B cell (primary cell): ENCODE measurements at regions of chr17 and their contacts with region 1.

Region 1: DNA sequence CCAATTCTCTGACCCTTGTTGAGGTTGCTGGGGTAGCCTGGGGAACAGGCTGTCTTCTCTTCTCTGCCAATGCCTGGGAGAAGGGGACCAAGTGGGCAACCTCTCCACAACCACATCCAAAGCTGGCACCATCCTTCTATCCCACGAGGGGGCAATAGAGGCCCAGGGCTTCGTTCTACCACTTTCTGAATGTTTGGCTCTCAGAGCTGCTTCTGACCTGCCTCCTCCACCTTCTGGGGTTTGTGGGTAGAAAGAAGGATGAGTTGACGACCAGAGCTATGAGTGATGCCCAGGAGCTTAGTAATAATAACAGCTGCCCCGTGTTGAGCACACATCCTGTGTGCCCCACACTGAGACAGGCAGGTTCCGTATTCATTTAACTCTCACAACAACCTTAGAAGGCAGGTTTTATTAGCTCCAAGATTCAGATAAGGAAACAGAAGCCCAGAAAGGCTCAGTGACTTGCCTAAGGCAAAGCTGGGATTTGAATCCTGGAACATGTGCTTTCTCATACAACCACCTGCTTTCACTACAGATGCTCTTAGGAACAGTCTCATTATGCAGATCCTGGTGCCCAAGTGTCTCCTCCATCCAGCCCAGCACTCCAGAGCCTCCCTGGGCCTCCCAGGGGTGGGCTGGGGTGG is 11.1 kb downstream of the TSPOAP1 start:
- DNase-seq: peak; percentile 87
- ATAC-seq: peak; percentile 97
- H3K4me3 ChIP-seq: no peak overlapping the region
- H3K4me3 Mint-ChIP-seq: peak overlapping the region; percentile 33
- H3K27ac ChIP-seq: peak overlapping the region; percentile 53 to 76
- H3K27ac Mint-ChIP-seq: peak overlapping the region; percentile 96
- H3K4me1 ChIP-seq: peaks cover 11 to 12% of the 10 kb centered on the region in 2 donors
- H3K4me1 Mint-ChIP-seq: peaks cover 14% of the 10 kb centered on the region
- H3K27me3 ChIP-seq: no peaks in the 10 kb centered on the region
- H3K27me3 Mint-ChIP-seq: no peaks in the 10 kb centered on the region
- CTCF ChIP-seq: peak; percentile 84

Region 2: DNA sequence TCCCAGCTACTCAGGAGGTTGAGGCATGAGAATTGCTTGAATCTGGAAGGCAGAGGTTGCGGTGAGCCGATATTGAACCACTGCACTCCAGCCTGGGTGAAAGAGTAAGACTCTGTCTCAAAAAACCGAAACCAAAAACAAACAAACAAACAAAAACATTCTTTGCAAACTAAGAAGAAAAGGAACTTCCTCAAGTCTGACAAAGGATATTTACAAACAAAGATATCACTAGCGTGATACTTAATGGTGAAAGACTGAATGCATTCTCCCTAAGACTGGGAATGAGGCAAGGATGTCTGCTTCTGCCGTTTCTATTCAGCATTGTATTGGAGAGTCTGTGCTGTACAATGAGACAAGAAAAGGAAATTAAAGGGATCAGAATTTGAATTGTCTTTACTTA is 26.3 kb before region 1 on chr17:
- CTCF ChIA-PET with region 1: no interaction called
- POLR2A ChIA-PET with region 1: no interaction called
- intact Hi-C with region 1: no loop called
- DNase-seq: no peak
- ATAC-seq: no peak
- H3K4me3 ChIP-seq: no peak overlapping the region
- H3K4me3 Mint-ChIP-seq: no peak overlapping the region
- H3K27ac ChIP-seq: no peak overlapping the region
- H3K27ac Mint-ChIP-seq: no peak overlapping the region
- H3K4me1 ChIP-seq: no peaks in the 10 kb centered on the region
- H3K4me1 Mint-ChIP-seq: no peaks in the 10 kb centered on the region
- H3K27me3 ChIP-seq: peaks cover 0 to 6% (median 4%) of the 10 kb centered on the region in 4 experiments
- H3K27me3 Mint-ChIP-seq: peaks cover 30% of the 10 kb centered on the region
- CTCF ChIP-seq: no peak

Region 3: GRCh38 chr17:58303971-58304725 is 13.4 kb before region 1 on chr17:
- CTCF ChIA-PET with region 1: interaction called, 59 read pairs
- POLR2A ChIA-PET with region 1: no interaction called
- intact Hi-C with region 1: no loop called
- DNase-seq: peak; percentile 70
- ATAC-seq: peak; percentile 91
- H3K4me3 ChIP-seq: no peak overlapping the region
- H3K4me3 Mint-ChIP-seq: no peak overlapping the region
- H3K27ac ChIP-seq: no peak overlapping the region
- H3K27ac Mint-ChIP-seq: peak overlapping the region; percentile 72
- H3K4me1 ChIP-seq: peaks cover 3 to 14% of the 10 kb centered on the region in 2 donors
- H3K4me1 Mint-ChIP-seq: peaks cover 11% of the 10 kb centered on the region
- H3K27me3 ChIP-seq: no peaks in the 10 kb centered on the region
- H3K27me3 Mint-ChIP-seq: no peaks in the 10 kb centered on the region
- CTCF ChIP-seq: peak; percentile 81

Region 4: GRCh38 chr17:58344047-58344790 is 26.7 kb after region 1 on chr17:
- CTCF ChIA-PET with region 1: interaction called, 587 read pairs
- POLR2A ChIA-PET with region 1: interaction called, 663 read pairs
- intact Hi-C with region 1: loop called (anchors 1 kb)
- DNase-seq: peak; percentile 95
- ATAC-seq: peak; percentile 85
- H3K4me3 ChIP-seq: peak overlapping the region; percentile 56 to 82 (median 62)
- H3K4me3 Mint-ChIP-seq: peak overlapping the region; percentile 88
- H3K27ac ChIP-seq: peak overlapping the region; percentile 98 to 99
- H3K27ac Mint-ChIP-seq: peak overlapping the region; percentile 94
- H3K4me1 ChIP-seq: peaks cover 72 to 73% of the 10 kb centered on the region in 2 donors
- H3K4me1 Mint-ChIP-seq: peaks cover 82% of the 10 kb centered on the region
- H3K27me3 ChIP-seq: no peaks in the 10 kb centered on the region
- H3K27me3 Mint-ChIP-seq: no peaks in the 10 kb centered on the region
- CTCF ChIP-seq: no peak

Region 5: GRCh38 chr17:58382108-58382871 is 64.7 kb after region 1 on chr17:
- CTCF ChIA-PET with region 1: interaction called, 12 read pairs
- POLR2A ChIA-PET with region 1: no interaction called
- intact Hi-C with region 1: no loop called
- DNase-seq: peak; percentile 47
- ATAC-seq: peak; percentile 53
- H3K4me3 ChIP-seq: peak overlapping the region in 2 of 5 experiments; percentile 13 to 45
- H3K4me3 Mint-ChIP-seq: peak overlapping the region; percentile 72
- H3K27ac ChIP-seq: peak overlapping the region; percentile 17 to 57
- H3K27ac Mint-ChIP-seq: peak overlapping the region; percentile 79
- H3K4me1 ChIP-seq: peaks cover 15 to 16% of the 10 kb centered on the region in 2 donors
- H3K4me1 Mint-ChIP-seq: peaks cover 28% of the 10 kb centered on the region
- H3K27me3 ChIP-seq: no peaks in the 10 kb centered on the region
- H3K27me3 Mint-ChIP-seq: no peaks in the 10 kb centered on the region
- CTCF ChIP-seq: no peak

Region 6: GRCh38 chr17:58432806-58433572 is 115.4 kb after region 1 on chr17:
- CTCF ChIA-PET with region 1: interaction called, 15 read pairs
- POLR2A ChIA-PET with region 1: no interaction called
- intact Hi-C with region 1: no loop called
- DNase-seq: no peak
- ATAC-seq: no peak
- H3K4me3 ChIP-seq: no peak overlapping the region
- H3K4me3 Mint-ChIP-seq: no peak overlapping the region
- H3K27ac ChIP-seq: no peak overlapping the region
- H3K27ac Mint-ChIP-seq: no peak overlapping the region
- H3K4me1 ChIP-seq: no peaks in the 10 kb centered on the region
- H3K4me1 Mint-ChIP-seq: peaks cover 2% of the 10 kb centered on the region
- H3K27me3 ChIP-seq: no peaks in the 10 kb centered on the region
- H3K27me3 Mint-ChIP-seq: no peaks in the 10 kb centered on the region
- CTCF ChIP-seq: no peak

Region 7: DNA sequence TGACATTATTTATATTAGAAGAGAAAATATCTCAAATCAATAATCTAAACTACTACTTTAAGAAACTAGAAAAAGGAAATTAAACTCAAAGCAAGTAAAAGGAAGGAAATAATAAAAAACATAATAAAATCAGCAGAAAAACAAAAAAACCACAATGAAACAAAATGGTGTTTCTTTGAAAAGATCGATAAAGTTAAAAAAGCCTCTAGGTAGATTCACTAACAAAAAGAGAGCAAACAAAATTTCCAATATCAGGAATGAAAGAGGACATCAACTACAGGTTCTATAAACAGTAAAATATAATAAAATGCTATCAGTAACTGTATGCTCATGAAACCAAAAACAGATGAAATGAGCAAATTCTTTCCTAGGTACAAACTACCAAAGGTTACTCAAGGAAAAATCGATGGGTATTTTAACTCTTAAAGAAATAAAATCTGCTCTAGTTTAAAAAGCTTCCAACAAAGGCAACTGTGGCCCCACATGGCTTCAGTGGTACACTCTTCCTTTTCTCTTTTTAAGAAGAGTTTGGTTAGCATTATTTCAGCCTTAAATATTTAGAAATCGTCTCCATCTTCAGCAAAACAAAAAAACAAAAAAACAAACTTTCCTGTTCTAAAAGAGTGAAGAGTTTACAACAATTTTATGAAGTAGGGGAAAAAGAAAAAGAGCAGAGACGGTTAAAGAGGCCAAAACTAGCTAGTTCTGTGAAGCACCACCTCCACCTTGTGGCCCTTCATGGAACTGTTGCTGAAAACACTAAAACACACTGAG is 687.0 kb after region 1 on chr17:
- CTCF ChIA-PET with region 1: interaction called, 10 read pairs
- POLR2A ChIA-PET with region 1: no interaction called
- intact Hi-C with region 1: no loop called
- DNase-seq: peak; percentile 81
- ATAC-seq: peak; percentile 37
- H3K4me3 ChIP-seq: no peak overlapping the region
- H3K4me3 Mint-ChIP-seq: peak overlapping the region; percentile 7
- H3K27ac ChIP-seq: peak overlapping the region in 1 of 2 donors; percentile 52
- H3K27ac Mint-ChIP-seq: peak overlapping the region; percentile 72
- H3K4me1 ChIP-seq: peaks cover 16 to 22% of the 10 kb centered on the region in 2 donors
- H3K4me1 Mint-ChIP-seq: peaks cover 28% of the 10 kb centered on the region
- H3K27me3 ChIP-seq: no peaks in the 10 kb centered on the region
- H3K27me3 Mint-ChIP-seq: no peaks in the 10 kb centered on the region
- CTCF ChIP-seq: peak; percentile 99